ENCODE measurements at regions of chr22 and their contacts with region 1.

Region 1: GRCh38 chr22:39170825-39171622 is 18.5 kb upstream of the CBX7 start:
- DNase-seq: peak; percentile 91
- ATAC-seq: peak; percentile 82
- H3K4me3 ChIP-seq: peak overlapping the region in 4 of 5 experiments; percentile 30 to 50 (median 46)
- H3K4me3 Mint-ChIP-seq: peak overlapping the region; percentile 88
- H3K27ac ChIP-seq: peak overlapping the region; percentile 44 to 81
- H3K27ac Mint-ChIP-seq: peak overlapping the region; percentile 92
- H3K4me1 ChIP-seq: peaks cover 32 to 45% of the 10 kb centered on the region in 2 donors
- H3K4me1 Mint-ChIP-seq: peaks cover 40% of the 10 kb centered on the region
- H3K27me3 ChIP-seq: no peaks in the 10 kb centered on the region
- H3K27me3 Mint-ChIP-seq: peaks cover 3% of the 10 kb centered on the region
- CTCF ChIP-seq: peak; percentile 99

Region 2: GRCh38 chr22:39242595-39243438 is 71.8 kb after region 1 on chr22:
- CTCF ChIA-PET with region 1: no interaction called
- POLR2A ChIA-PET with region 1: interaction called, 11 read pairs
- intact Hi-C with region 1: no loop called
- DNase-seq: peak; percentile 48
- ATAC-seq: no peak
- H3K4me3 ChIP-seq: peak overlapping the region in 3 of 5 experiments; percentile 20 to 33 (median 29)
- H3K4me3 Mint-ChIP-seq: peak overlapping the region; percentile 76
- H3K27ac ChIP-seq: no peak overlapping the region
- H3K27ac Mint-ChIP-seq: no peak overlapping the region
- H3K4me1 ChIP-seq: peaks cover 35 to 43% of the 10 kb centered on the region in 2 donors
- H3K4me1 Mint-ChIP-seq: peaks cover 30% of the 10 kb centered on the region
- H3K27me3 ChIP-seq: peaks cover 0 to 82% (median 34%) of the 10 kb centered on the region in 4 experiments
- H3K27me3 Mint-ChIP-seq: peaks cover 70% of the 10 kb centered on the region
- CTCF ChIP-seq: no peak

Region 3: GRCh38 chr22:39306581-39307361 is 135.7 kb after region 1 on chr22:
- CTCF ChIA-PET with region 1: interaction called, 121 read pairs
- POLR2A ChIA-PET with region 1: interaction called, 10 read pairs
- intact Hi-C with region 1: loop called (anchors 1 kb)
- DNase-seq: peak; percentile 54
- ATAC-seq: no peak
- H3K4me3 ChIP-seq: no peak overlapping the region
- H3K4me3 Mint-ChIP-seq: no peak overlapping the region
- H3K27ac ChIP-seq: no peak overlapping the region
- H3K27ac Mint-ChIP-seq: no peak overlapping the region
- H3K4me1 ChIP-seq: peaks cover 0 to 18% of the 10 kb centered on the region in 2 donors
- H3K4me1 Mint-ChIP-seq: peaks cover 15% of the 10 kb centered on the region
- H3K27me3 ChIP-seq: no peaks in the 10 kb centered on the region
- H3K27me3 Mint-ChIP-seq: no peaks in the 10 kb centered on the region
- CTCF ChIP-seq: peak; percentile 28

Region 4: DNA sequence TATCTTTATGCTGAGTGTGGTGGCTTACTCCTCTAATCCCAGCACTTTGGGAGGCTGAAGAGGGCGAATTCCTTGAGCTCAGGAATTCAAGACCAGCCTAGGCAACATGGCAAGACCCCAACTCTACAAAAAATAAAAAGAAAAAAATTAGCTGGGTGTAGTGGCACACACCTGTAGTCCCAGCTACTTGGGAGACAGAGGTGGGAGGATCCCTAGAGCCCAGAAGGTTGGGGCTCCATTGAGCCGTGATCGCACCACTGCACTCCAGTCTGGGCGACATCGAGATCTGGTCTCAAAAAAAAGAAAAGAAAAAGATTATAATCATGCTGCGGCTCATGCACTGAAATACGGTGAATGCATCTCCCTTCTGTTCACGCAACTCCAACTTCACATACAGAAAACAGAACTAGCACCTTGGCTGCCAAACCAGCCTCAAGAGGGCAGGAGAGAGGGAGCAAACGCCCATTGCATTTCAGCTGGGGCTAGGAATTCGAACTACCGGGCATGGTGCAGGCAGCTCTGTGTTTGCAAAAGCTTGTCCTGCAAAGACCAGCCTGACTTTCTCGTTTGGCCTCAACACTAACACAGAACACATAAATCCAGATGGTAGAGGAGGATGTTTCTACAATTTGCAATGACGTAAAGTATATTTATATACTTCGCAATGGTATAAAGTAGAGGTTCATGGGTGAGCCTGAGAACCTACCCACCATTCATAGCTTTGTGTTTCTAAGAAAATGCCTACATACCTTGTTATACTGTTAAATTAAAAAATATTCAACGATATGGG is 172.4 kb after region 1 on chr22:
- CTCF ChIA-PET with region 1: interaction called, 11 read pairs
- POLR2A ChIA-PET with region 1: no interaction called
- intact Hi-C with region 1: no loop called
- DNase-seq: peak; percentile 76
- ATAC-seq: peak; percentile 90
- H3K4me3 ChIP-seq: no peak overlapping the region
- H3K4me3 Mint-ChIP-seq: no peak overlapping the region
- H3K27ac ChIP-seq: no peak overlapping the region
- H3K27ac Mint-ChIP-seq: no peak overlapping the region
- H3K4me1 ChIP-seq: peaks cover 6 to 8% of the 10 kb centered on the region in 2 donors
- H3K4me1 Mint-ChIP-seq: peaks cover 4% of the 10 kb centered on the region
- H3K27me3 ChIP-seq: peaks cover 0 to 10% (median 0%) of the 10 kb centered on the region in 4 experiments
- H3K27me3 Mint-ChIP-seq: peaks cover 10% of the 10 kb centered on the region
- CTCF ChIP-seq: peak; percentile 85